Gastrocnemius medialis (tissue), 4 donors: ENCODE measurements at regions of chr10 and their contacts with region 1.

Region 1: DNA sequence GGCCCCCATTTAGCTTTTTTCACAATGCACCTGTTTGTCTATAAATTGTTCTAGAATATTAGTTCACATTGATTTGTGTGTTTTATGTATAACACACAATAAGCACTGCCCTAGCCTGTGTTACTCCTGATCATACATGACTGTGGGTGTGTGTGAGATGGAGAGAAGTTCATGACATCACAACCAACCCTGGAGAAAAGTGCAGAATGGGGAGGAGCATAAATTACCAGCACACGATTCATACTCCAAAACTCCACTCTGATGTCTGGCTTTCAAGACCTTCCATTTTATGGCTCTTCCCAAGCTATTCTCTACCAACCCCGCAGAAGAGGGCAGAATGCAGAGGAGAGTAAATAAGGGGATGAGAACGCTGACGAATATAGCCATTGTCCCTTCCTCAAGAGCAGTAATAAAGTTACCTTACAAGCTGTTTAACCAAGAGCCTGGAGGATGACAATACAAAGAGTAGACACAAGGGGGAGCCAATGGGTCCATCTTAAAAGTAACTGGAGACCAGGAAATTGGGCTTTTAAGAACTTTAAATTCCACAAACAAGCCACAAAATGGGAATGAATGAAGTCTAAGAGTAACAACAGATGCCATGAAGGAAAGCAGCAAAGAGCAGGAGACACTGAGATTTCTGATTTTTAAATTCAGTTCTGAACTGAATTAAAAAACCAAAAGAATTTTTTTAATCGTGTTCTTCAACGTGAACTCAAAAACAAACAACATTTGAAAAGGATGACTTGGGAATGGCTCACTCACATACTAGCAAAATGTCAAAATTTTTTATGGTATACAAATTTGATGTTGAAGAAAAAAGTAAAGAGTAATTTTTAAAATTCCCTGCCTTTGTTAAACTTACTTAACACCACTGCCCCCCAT is 159.6 kb downstream of the PARD3 start:
- DNase-seq: no peak
- ATAC-seq: peak; percentile 37 to 46
- H3K4me3 ChIP-seq: no peak overlapping the region
- H3K27ac ChIP-seq: no peak overlapping the region
- H3K4me1 ChIP-seq: peaks cover 9 to 13% of the 10 kb centered on the region in 2 donors
- H3K27me3 ChIP-seq: no peaks in the 10 kb centered on the region
- CTCF ChIP-seq: peak; percentile 55 to 71 (median 63)
- POLR2A ChIP-seq: no peak

Region 2: DNA sequence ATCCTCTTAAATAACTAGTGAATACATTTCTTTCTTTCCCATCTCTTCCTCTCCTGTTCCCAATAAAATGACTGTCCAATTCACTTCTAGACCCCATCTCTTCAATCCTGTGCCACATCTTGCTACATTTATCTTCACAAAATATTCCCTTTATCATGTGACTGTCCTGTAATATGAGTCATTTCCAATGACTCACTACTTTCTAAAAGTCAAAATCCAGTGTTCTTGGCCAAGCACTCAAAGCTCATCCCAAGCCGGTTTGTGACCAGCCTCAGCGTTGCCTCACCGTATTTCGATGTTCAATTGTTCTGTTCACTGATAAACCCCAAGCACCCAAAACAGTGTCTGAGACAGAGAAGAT is 54.8 kb after region 1 on chr10:
- in situ Hi-C with region 1: no loop called
- intact Hi-C with region 1: no loop called
- DNase-seq: peak in 1 of 2 donors; percentile 30
- ATAC-seq: peak; percentile 73 to 84
- H3K4me3 ChIP-seq: no peak overlapping the region
- H3K27ac ChIP-seq: peak overlapping the region; percentile 1 to 49 (median 29)
- H3K4me1 ChIP-seq: peaks cover 55 to 61% of the 10 kb centered on the region in 2 donors
- H3K27me3 ChIP-seq: no peaks in the 10 kb centered on the region
- CTCF ChIP-seq: no peak
- POLR2A ChIP-seq: no peak

Region 3: GRCh38 chr10:34954168-34954567 is 298.6 kb after region 1 on chr10:
- in situ Hi-C with region 1: loop called in 3 of 4 experiments (anchors 10 to 25 kb)
- intact Hi-C with region 1: no loop called
- DNase-seq: no peak
- ATAC-seq: no peak
- H3K4me3 ChIP-seq: no peak overlapping the region
- H3K27ac ChIP-seq: no peak overlapping the region
- H3K4me1 ChIP-seq: peaks cover 3 to 5% of the 10 kb centered on the region in 2 donors
- H3K27me3 ChIP-seq: no peaks in the 10 kb centered on the region
- CTCF ChIP-seq: no peak
- POLR2A ChIP-seq: no peak